Dorsolateral prefrontal cortex (tissue), 120 donors: ENCODE measurements at regions of chr22 and their contacts with region 1.

Region 1: GRCh38 chr22:41910050-41911000 is 4.5 kb downstream of the SHISA8 start:
- DNase-seq: peak in 8 of 10 donors; percentile 38 to 79 (median 66)
- H3K4me3 ChIP-seq: peak overlapping the region; percentile 16 to 68 (median 52)
- H3K27ac ChIP-seq: peak overlapping the region in 45 of 59 donors; percentile 2 to 88 (median 62)
- H3K27me3 ChIP-seq: peaks cover 0 to 50% (median 26%) of the 10 kb centered on the region in 45 donors
- CTCF ChIP-seq: peak in 1 of 56 donors; percentile 12

Region 2: GRCh38 chr22:41697126-41697775 is 213.1 kb before region 1 on chr22:
- intact Hi-C with region 1: no loop called
- DNase-seq: peak; percentile 85 to 96 (median 92)
- H3K4me3 ChIP-seq: peak overlapping the region in 22 of 59 donors; percentile 4 to 41 (median 29)
- H3K27ac ChIP-seq: peak overlapping the region in 36 of 59 donors; percentile 4 to 82 (median 50)
- H3K27me3 ChIP-seq: no peaks in the 10 kb centered on the region
- CTCF ChIP-seq: peak; percentile 90 to 100 (median 97)

Region 3: DNA sequence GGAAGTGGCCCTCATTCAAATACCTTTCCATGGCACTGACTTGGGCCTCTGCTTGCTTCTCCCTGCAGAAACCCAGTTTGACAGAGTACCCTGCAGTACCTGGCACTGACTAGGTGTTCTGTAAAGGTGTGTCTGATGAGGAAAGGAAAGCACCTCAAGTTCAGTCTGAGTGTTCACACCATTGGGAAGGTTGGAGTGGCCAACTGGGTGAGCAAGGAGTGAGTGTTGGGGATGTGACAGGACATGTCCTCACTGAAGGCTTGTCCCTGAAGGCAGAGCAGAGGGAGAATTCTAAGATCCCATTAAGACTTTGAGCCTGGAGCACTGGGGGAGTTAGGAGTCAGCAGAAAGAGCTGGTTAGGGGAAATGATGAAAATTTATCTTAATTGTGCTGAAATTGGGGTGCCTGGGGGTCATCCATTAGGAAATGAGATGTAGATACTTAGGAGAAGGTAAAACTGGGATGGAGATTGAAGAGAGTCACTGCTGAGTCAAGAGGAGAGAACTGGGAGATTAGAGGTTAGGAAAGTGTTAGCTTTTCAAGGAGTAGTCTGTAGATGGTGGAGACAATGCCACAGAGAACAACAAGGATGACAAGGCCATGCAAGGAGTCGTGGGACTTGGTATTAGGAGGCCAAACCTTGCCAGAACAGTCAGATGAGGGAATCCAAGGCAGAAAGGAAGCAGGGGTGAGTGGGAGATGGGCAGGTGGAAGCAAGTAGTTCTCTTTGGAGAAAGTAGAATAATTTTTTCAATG is 71.3 kb before region 1 on chr22:
- intact Hi-C with region 1: loop called (anchors 5 kb)
- DNase-seq: no peak
- H3K4me3 ChIP-seq: no peak overlapping the region
- H3K27ac ChIP-seq: peak overlapping the region in 19 of 59 donors; percentile 0 to 60 (median 21)
- H3K27me3 ChIP-seq: no peaks in the 10 kb centered on the region
- CTCF ChIP-seq: no peak